Activated B cell treated with CpG ODN at 0.5 μM for 24 hours (primary cell): ENCODE measurements at regions of chr14 and their contacts with region 1.

Region 1: GRCh38 chr14:20782280-20782890 is 1.3 kb downstream of the RNASE6 start:
- DNase-seq: no peak
- ATAC-seq: peak; percentile 59
- H3K4me3 Mint-ChIP-seq: peak overlapping the region; percentile 86
- H3K27ac Mint-ChIP-seq: peak overlapping the region; percentile 98
- H3K4me1 Mint-ChIP-seq: peaks cover 68% of the 10 kb centered on the region
- H3K27me3 Mint-ChIP-seq: no peaks in the 10 kb centered on the region
- CTCF ChIP-seq: no peak

Region 2: GRCh38 chr14:20714593-20715250 is 67.7 kb before region 1 on chr14:
- CTCF ChIA-PET with region 1: no interaction called
- POLR2A ChIA-PET with region 1: interaction called, 20 read pairs
- intact Hi-C with region 1: loop called (anchors 1 kb)
- DNase-seq: no peak
- ATAC-seq: no peak
- H3K4me3 Mint-ChIP-seq: no peak overlapping the region
- H3K27ac Mint-ChIP-seq: peak overlapping the region; percentile 94
- H3K4me1 Mint-ChIP-seq: peaks cover 68% of the 10 kb centered on the region
- H3K27me3 Mint-ChIP-seq: no peaks in the 10 kb centered on the region
- CTCF ChIP-seq: no peak

Region 3: GRCh38 chr14:20799892-20800544 is 17.6 kb after region 1 on chr14:
- CTCF ChIA-PET with region 1: interaction called, 3 read pairs
- POLR2A ChIA-PET with region 1: interaction called, 7 read pairs
- intact Hi-C with region 1: loop called (anchors 2 kb)
- DNase-seq: no peak
- ATAC-seq: peak; percentile 45
- H3K4me3 Mint-ChIP-seq: peak overlapping the region; percentile 19
- H3K27ac Mint-ChIP-seq: no peak overlapping the region
- H3K4me1 Mint-ChIP-seq: peaks cover 38% of the 10 kb centered on the region
- H3K27me3 Mint-ChIP-seq: no peaks in the 10 kb centered on the region
- CTCF ChIP-seq: no peak

Region 4: GRCh38 chr14:20818861-20819260 is 36.5 kb after region 1 on chr14:
- CTCF ChIA-PET with region 1: interaction called, 4 read pairs
- POLR2A ChIA-PET with region 1: interaction called, 17 read pairs
- intact Hi-C with region 1: loop called (anchors 5 kb)
- DNase-seq: no peak
- ATAC-seq: no peak
- H3K4me3 Mint-ChIP-seq: no peak overlapping the region
- H3K27ac Mint-ChIP-seq: no peak overlapping the region
- H3K4me1 Mint-ChIP-seq: peaks cover 28% of the 10 kb centered on the region
- H3K27me3 Mint-ChIP-seq: no peaks in the 10 kb centered on the region
- CTCF ChIP-seq: no peak

Region 5: DNA sequence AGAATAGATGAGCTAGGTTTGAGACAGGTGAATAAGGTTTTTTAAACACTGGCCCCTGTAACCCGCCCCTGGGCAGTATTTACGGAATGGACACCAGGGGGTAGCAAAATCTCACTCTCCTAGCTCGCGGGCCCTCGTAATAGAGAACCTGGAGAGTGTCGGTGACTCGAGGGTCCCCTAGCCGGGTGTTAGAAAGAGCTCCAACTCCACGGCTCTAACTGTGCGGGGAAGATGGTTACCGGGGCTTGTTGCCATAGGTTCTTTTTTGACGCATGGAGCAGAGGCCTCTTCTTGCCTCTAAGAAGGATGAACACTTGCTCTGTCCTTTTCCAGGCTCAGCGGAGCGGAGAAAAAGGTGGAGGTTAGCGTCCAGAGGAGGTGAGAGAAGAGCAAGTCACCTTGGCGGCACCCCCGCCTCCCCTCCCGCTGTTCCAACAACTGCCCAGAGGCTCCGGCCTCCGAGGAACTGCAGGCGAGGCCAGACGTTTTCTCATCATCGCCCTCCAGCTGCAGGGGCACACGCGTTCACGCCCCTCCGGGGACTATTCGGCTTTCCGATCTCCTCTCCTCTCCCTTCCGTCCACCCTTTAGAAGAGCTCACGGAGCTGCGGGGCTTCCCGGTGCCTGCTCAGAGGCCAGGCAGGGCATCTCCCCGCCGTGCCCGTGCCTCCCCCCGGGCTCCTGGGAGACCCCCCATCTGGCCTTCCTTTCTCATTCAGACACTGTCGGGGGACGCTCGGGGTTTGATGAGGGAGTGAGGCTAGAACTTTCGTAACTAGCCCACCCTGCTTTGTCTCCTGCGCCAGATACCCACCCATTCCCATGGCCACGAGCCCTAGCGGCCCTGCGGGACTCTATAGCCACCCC is 286.4 kb after region 1 on chr14:
- CTCF ChIA-PET with region 1: no interaction called
- POLR2A ChIA-PET with region 1: no interaction called
- intact Hi-C with region 1: no loop called
- DNase-seq: no peak
- ATAC-seq: peak; percentile 53
- H3K4me3 Mint-ChIP-seq: peak overlapping the region; percentile 82
- H3K27ac Mint-ChIP-seq: no peak overlapping the region
- H3K4me1 Mint-ChIP-seq: peaks cover 42% of the 10 kb centered on the region
- H3K27me3 Mint-ChIP-seq: peaks cover 20% of the 10 kb centered on the region
- CTCF ChIP-seq: no peak